OCI-LY7 (cell line): ENCODE measurements at regions of chr10 and their contacts with region 1.

Region 1: GRCh38 chr10:3805791-3806461 is 20.9 kb upstream of the KLF6 start:
- DNase-seq: peak; percentile 93
- H3K4me3 ChIP-seq: peak overlapping the region; percentile 61
- H3K27ac ChIP-seq: peak overlapping the region; percentile 98
- H3K4me1 ChIP-seq: peaks cover 83% of the 10 kb centered on the region
- CTCF ChIP-seq: no peak

Region 2: DNA sequence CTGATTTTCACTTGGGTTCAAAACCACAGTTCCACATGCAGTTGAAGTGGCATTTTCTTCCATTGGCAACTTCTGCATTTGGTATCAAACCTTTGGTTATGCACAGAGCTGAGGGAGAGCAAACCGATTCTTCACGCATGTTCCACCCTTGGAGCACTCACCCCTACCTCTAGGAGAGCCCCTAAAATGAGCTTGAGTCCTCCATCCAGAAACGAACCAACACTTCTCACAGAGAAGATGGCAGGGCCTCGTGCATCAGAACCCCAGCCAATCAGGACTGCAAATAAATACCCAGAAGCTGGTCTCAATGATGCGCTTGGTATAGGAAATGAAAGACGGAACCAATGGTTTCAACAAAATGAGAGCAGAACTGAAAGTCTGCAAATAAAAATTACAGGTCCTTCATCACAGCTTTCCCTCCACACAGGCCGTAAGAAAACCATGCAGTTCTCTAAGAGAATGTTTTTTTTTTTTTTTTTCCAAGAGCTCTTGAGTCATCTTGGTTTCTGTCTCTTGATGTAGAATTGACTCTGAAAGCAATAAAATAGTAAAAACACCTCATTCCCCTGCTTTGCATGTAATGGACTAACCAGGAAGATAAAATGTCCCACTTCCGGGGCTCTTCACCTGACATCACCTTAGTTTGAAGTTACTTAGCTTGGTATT is 44.8 kb before region 1 on chr10:
- CTCF ChIA-PET with region 1: no interaction called
- POLR2A ChIA-PET with region 1: interaction called, 3 read pairs
- intact Hi-C with region 1: loop called (anchors 2 kb)
- DNase-seq: peak; percentile 46
- H3K4me3 ChIP-seq: no peak overlapping the region
- H3K27ac ChIP-seq: peak overlapping the region; percentile 43
- H3K4me1 ChIP-seq: peaks cover 49% of the 10 kb centered on the region
- CTCF ChIP-seq: no peak

Region 3: GRCh38 chr10:3873728-3874461 is 68.0 kb after region 1 on chr10:
- CTCF ChIA-PET with region 1: no interaction called
- POLR2A ChIA-PET with region 1: interaction called, 12 read pairs
- intact Hi-C with region 1: loop called (anchors 2 kb)
- DNase-seq: peak; percentile 89
- H3K4me3 ChIP-seq: peak overlapping the region; percentile 14
- H3K27ac ChIP-seq: no peak overlapping the region
- H3K4me1 ChIP-seq: peaks cover 50% of the 10 kb centered on the region
- CTCF ChIP-seq: no peak